K562 (cell line): ENCODE measurements at regions of chr15 and their contacts with region 1.

Region 1: GRCh38 chr15:62087671-62088352 is 21.0 kb downstream of the C2CD4A start:
- DNase-seq: no peak
- ATAC-seq: no peak
- H3K4me3 ChIP-seq: no peak overlapping the region
- H3K27ac ChIP-seq: no peak overlapping the region
- H3K4me1 ChIP-seq: no peaks in the 10 kb centered on the region
- H3K27me3 ChIP-seq: peaks cover 4% of the 10 kb centered on the region in 2 experiments; a peak in 1 of 5 replicates
- CTCF ChIP-seq: no peak
- EP300 ChIP-seq: no peak
- POLR2A ChIP-seq: no peak
- RAD21 ChIP-seq: no peak

Region 2: DNA sequence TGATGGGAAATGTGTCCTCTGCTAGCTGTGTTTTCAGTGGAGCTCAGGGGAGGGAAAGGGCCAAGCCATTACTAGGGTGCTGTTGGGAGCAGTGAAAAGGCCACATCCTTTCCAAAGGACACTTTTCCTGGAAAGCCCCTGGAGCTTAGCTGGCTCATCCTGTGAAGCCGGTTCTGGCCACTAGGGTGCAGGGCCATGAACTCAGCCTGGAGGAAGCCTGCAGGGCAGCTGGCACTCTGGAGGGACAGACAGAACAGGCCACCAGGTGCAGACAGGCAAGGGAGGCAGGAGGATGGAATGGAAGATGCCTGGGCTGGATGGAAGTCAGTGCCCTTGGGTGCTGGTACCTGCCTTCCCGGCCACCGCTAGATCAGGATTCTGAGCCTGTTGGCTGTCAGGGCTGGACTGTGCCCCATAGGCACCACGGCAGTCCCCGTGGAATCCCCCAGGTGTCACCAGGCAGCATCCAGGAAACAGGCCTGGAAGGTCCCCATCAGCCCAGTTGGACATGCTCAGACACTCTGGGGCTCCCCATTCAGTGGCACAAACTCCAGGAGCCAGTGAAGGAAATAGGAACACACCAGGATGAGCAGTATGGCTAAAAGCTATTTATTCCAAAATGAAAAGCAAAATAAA is 153.4 kb after region 1 on chr15:
- CTCF ChIA-PET with region 1: no interaction called
- POLR2A ChIA-PET with region 1: no interaction called
- in situ Hi-C with region 1: no loop called
- intact Hi-C with region 1: loop called (anchors 10 kb)
- DNase-seq: peak in 1 of 4 experiments; percentile 16
- ATAC-seq: peak; percentile 80
- H3K4me3 ChIP-seq: no peak overlapping the region
- H3K27ac ChIP-seq: no peak overlapping the region
- H3K4me1 ChIP-seq: no peaks in the 10 kb centered on the region
- H3K27me3 ChIP-seq: peaks cover 0 to 8% of the 10 kb centered on the region in 2 experiments; a peak in 1 of 5 replicates
- CTCF ChIP-seq: peak; percentile 35 to 57 (median 37); a peak in 5 of 6 replicates
- EP300 ChIP-seq: no peak
- POLR2A ChIP-seq: no peak
- RAD21 ChIP-seq: no peak

Region 3: GRCh38 chr15:62306851-62307504 is 219.2 kb after region 1 on chr15:
- CTCF ChIA-PET with region 1: no interaction called
- POLR2A ChIA-PET with region 1: no interaction called
- in situ Hi-C with region 1: no loop called
- intact Hi-C with region 1: loop called (anchors 10 kb)
- DNase-seq: peak; percentile 40 to 70 (median 51)
- ATAC-seq: peak; percentile 97
- H3K4me3 ChIP-seq: no peak overlapping the region
- H3K27ac ChIP-seq: no peak overlapping the region
- H3K4me1 ChIP-seq: no peaks in the 10 kb centered on the region; a peak in 1 of 5 replicates
- H3K27me3 ChIP-seq: peaks cover 2 to 4% of the 10 kb centered on the region in 2 experiments; a peak in 3 of 5 replicates
- CTCF ChIP-seq: peak; percentile 50 to 68 (median 67); a peak in 5 of 6 replicates
- EP300 ChIP-seq: no peak
- POLR2A ChIP-seq: no peak
- RAD21 ChIP-seq: peak; percentile 65 to 68